ENCODE measurements at regions of chr1 and their contacts with region 1.

Region 1: DNA sequence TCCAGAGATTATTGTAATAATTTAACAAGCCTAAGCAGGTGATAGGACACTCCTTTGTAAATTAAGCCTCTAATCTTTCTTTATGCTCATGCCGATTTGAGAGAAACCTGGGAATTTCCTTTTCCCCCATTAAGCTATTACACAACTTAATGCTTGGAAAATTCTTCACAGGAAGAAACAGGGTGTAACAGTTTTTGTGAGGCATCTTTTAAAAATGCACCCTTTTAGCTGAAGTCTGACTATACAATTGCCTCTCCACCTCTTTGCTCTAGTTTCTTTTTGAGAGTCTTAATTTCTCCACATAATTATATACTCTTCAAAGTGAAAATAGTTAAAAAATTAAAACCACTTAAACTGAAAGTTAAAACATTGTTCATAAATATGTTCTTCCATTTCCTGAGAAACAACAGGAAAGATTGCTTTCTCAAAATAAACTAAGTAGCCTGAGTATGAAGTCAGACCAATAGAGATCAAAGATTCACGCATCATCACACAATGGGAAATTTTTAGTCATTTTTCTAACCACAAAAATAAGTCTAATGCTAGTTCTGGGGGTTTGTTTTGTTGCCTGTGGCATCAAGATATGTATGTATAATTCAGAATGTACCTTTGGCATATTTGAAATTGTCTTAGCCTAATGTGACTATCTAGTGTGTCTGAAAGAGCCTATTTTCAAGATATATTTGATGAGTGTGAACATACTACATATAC is 34.7 kb downstream of the LRRC8D start:
- DNase-seq: no peak
- ATAC-seq: no peak
- H3K4me3 ChIP-seq: no peak overlapping the region
- H3K27ac ChIP-seq: peak overlapping the region in 3 of 10 donors; percentile 9 to 51 (median 37)
- H3K4me1 ChIP-seq: peaks cover 0 to 12% (median 0%) of the 10 kb centered on the region in 9 donors
- H3K27me3 ChIP-seq: no peaks in the 10 kb centered on the region
- CTCF ChIP-seq: no peak

Region 2: DNA sequence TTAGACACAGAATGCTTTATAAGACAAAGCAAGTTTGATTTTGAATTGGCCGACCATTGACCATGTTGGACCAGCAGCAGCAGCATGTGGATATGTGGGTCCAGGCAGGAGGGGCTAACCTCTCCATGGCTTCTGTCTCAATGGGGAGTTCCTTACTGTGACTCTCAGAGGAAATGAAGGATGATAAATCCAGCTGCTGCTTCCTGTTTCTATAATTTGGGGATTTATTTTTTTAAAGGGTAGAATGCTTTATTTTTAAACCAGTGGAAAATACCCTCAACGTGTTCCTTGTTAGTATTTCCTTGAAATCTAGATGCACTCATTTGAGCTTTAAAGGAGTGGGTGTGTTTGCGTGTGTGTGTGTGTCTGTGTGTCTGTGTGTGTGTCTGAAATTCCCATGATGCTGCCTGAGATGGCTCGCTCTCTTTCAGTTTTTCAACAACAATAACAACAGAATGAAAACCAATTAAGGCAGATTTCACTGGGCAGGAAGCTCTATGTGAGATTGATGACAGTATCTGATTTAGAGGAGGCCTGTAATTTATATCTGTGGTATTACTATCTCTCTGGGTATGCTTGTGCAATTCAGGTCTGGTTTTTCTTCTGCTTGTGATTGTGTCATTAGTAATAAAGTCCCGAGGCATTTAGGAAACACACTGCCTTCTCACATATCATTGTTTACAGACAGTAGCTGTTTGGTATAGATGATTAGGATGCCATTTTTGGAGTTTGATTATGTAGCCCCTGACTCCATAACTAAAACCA is 53.3 kb after region 1 on chr1:
- intact Hi-C with region 1: loop called in 1 of 10 experiments (anchors 5 kb)
- DNase-seq: peak in 1 of 2 donors; percentile 54
- ATAC-seq: peak in 7 of 8 donors; percentile 54 to 83 (median 70)
- H3K4me3 ChIP-seq: peak overlapping the region in 2 of 10 donors; percentile 8
- H3K27ac ChIP-seq: peak overlapping the region in 9 of 10 donors; percentile 26 to 68 (median 58)
- H3K4me1 ChIP-seq: peaks cover 12 to 78% (median 66%) of the 10 kb centered on the region in 9 donors
- H3K27me3 ChIP-seq: no peaks in the 10 kb centered on the region
- CTCF ChIP-seq: no peak